GM12878 (cell line): ENCODE measurements at regions of chr4 and their contacts with region 1.

Region 1: DNA sequence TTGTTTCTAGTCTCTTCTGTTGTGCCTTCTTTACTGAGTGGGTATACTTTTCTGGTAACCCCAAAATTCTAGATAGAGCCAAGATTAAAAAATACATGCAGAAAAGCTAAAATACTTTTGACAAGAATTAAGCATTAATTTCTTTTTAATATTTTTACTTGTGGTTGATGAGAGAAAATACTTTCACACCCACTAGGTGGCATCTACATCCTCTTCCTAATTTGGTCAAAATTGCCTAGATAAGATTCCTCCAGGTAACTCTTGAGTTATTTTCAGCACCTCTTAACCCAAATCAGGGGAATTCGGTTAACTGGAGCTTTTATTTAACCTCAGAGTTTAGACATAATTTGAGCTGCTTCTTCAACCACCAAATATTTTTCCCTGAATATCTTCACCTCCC is 28.4 kb upstream of the COX7B2 start:
- DNase-seq: no peak
- ATAC-seq: 0 out of 3 replicates have a peak, but pooled peaks have one; percentile 42
- H3K4me3 ChIP-seq: no peak overlapping the region
- H3K27ac ChIP-seq: no peak overlapping the region
- H3K4me1 ChIP-seq: no peaks in the 10 kb centered on the region
- H3K27me3 ChIP-seq: no peaks in the 10 kb centered on the region
- CTCF ChIP-seq: peak in 2 of 3 experiments; percentile 12 to 41; a peak in 2 of 6 replicates
- EP300 ChIP-seq: no peak
- POLR2A ChIP-seq: no peak
- RAD21 ChIP-seq: peak; percentile 50

Region 2: GRCh38 chr4:46656071-46656470 is 281.4 kb before region 1 on chr4:
- CTCF ChIA-PET with region 1: no interaction called
- POLR2A ChIA-PET with region 1: no interaction called
- RAD21 ChIA-PET with region 1: no interaction called
- SMC1A ChIA-PET with region 1: no interaction called
- in situ Hi-C with region 1: no loop called
- intact Hi-C with region 1: no loop called
- DNase-seq: no peak
- ATAC-seq: peak; percentile 58
- H3K4me3 ChIP-seq: no peak overlapping the region
- H3K27ac ChIP-seq: no peak overlapping the region
- H3K4me1 ChIP-seq: no peaks in the 10 kb centered on the region
- H3K27me3 ChIP-seq: no peaks in the 10 kb centered on the region
- CTCF ChIP-seq: no peak
- EP300 ChIP-seq: no peak
- POLR2A ChIP-seq: no peak
- RAD21 ChIP-seq: no peak

Region 3: GRCh38 chr4:46900082-46900481 is 37.4 kb before region 1 on chr4:
- CTCF ChIA-PET with region 1: no interaction called
- POLR2A ChIA-PET with region 1: no interaction called
- RAD21 ChIA-PET with region 1: no interaction called
- SMC1A ChIA-PET with region 1: no interaction called
- in situ Hi-C with region 1: no loop called
- intact Hi-C with region 1: no loop called
- DNase-seq: no peak
- ATAC-seq: no peak
- H3K4me3 ChIP-seq: no peak overlapping the region
- H3K27ac ChIP-seq: no peak overlapping the region
- H3K4me1 ChIP-seq: no peaks in the 10 kb centered on the region
- H3K27me3 ChIP-seq: no peaks in the 10 kb centered on the region
- CTCF ChIP-seq: no peak
- EP300 ChIP-seq: no peak
- POLR2A ChIP-seq: no peak
- RAD21 ChIP-seq: no peak

Region 4: GRCh38 chr4:46956451-46956850 is 19.0 kb after region 1 on chr4:
- CTCF ChIA-PET with region 1: interaction called, 41 read pairs
- POLR2A ChIA-PET with region 1: no interaction called
- RAD21 ChIA-PET with region 1: interaction called, 6 read pairs
- SMC1A ChIA-PET with region 1: interaction called, 47 read pairs
- in situ Hi-C with region 1: no loop called
- intact Hi-C with region 1: no loop called
- DNase-seq: no peak
- ATAC-seq: no peak
- H3K4me3 ChIP-seq: no peak overlapping the region
- H3K27ac ChIP-seq: no peak overlapping the region
- H3K4me1 ChIP-seq: no peaks in the 10 kb centered on the region
- H3K27me3 ChIP-seq: no peaks in the 10 kb centered on the region
- CTCF ChIP-seq: no peak
- EP300 ChIP-seq: no peak
- POLR2A ChIP-seq: no peak
- RAD21 ChIP-seq: no peak

Region 5: GRCh38 chr4:46986922-46987638 is 49.6 kb after region 1 on chr4:
- CTCF ChIA-PET with region 1: interaction called, 4 read pairs
- POLR2A ChIA-PET with region 1: no interaction called
- RAD21 ChIA-PET with region 1: interaction called, 9 read pairs
- SMC1A ChIA-PET with region 1: interaction called, 22 read pairs
- in situ Hi-C with region 1: no loop called
- intact Hi-C with region 1: no loop called
- DNase-seq: no peak
- ATAC-seq: peak; percentile 55; the same call in 2 of the 3 replicates
- H3K4me3 ChIP-seq: no peak overlapping the region
- H3K27ac ChIP-seq: no peak overlapping the region
- H3K4me1 ChIP-seq: no peaks in the 10 kb centered on the region
- H3K27me3 ChIP-seq: no peaks in the 10 kb centered on the region
- CTCF ChIP-seq: no peak
- EP300 ChIP-seq: no peak
- POLR2A ChIP-seq: no peak
- RAD21 ChIP-seq: no peak

Region 6: DNA sequence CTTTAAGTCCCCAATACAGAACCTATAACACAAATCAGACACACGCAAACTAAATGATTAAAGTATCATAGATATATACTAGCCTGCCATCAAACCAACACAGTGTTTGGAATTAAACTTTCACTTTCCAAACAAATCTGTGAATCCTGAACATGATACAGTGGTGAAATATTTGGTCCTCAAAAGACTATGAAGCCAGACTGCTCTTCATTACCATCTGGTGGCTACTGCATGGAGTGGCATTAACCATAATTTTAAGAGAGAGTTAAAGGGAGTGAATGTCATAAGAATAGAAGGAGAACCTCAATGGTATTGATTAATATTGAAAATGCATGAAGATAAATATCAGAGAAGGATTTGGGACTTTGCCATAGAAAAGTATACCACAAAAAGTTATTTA is 65.1 kb after region 1 on chr4:
- CTCF ChIA-PET with region 1: interaction called, 46 read pairs
- POLR2A ChIA-PET with region 1: no interaction called
- RAD21 ChIA-PET with region 1: interaction called, 8 read pairs
- SMC1A ChIA-PET with region 1: interaction called, 70 read pairs
- in situ Hi-C with region 1: no loop called
- intact Hi-C with region 1: loop called (anchors 1 kb)
- DNase-seq: no peak
- ATAC-seq: peak; percentile 73
- H3K4me3 ChIP-seq: no peak overlapping the region
- H3K27ac ChIP-seq: no peak overlapping the region
- H3K4me1 ChIP-seq: no peaks in the 10 kb centered on the region
- H3K27me3 ChIP-seq: no peaks in the 10 kb centered on the region
- CTCF ChIP-seq: peak in 2 of 3 experiments; percentile 32 to 40; a peak in 3 of 6 replicates
- EP300 ChIP-seq: no peak
- POLR2A ChIP-seq: no peak
- RAD21 ChIP-seq: peak; percentile 74

Region 7: DNA sequence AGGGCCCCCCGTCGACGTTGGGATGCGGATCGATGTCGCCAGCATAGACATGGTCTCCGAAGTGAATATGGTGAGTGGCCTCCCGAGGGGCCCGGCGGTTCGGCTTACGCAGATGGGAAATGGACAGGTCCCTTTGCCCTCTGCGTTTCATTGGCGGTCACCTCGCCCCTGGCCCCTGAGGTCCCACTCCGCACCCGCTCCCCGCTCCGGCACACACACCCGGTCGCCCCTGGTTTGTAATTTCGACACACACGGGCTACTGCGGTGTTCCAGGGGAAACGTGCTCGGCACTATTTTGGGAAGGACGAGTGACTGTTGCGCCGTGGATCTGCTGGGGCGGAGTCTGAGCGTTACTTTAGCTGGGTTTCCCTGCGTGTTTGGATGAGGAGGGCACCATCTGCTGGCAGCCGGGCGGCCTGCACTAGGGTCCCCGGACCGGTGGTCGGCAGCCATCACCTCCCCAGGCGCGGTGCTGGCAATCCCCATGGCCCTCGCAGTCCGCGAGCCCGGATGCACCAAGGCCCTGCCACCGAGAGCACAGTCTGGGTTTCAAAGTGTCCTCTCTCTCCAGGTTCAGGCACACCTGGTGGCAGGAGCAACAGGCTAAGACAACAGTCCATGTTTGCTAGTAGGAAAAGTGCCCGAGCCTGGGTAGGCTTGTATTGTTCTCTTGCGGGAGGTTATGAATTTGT is 95.1 kb after region 1 on chr4:
- CTCF ChIA-PET with region 1: interaction called, 79 read pairs
- POLR2A ChIA-PET with region 1: no interaction called
- RAD21 ChIA-PET with region 1: interaction called, 52 read pairs
- SMC1A ChIA-PET with region 1: interaction called, 57 read pairs
- in situ Hi-C with region 1: loop called (anchors 5 kb)
- intact Hi-C with region 1: loop called (anchors 1 kb)
- DNase-seq: no peak
- ATAC-seq: peak; percentile 98
- H3K4me3 ChIP-seq: peak overlapping the region; percentile 21; the same call in 1 of the 2 replicates
- H3K27ac ChIP-seq: no peak overlapping the region
- H3K4me1 ChIP-seq: no peaks in the 10 kb centered on the region
- H3K27me3 ChIP-seq: peaks cover 2 to 10% of the 10 kb centered on the region in 2 experiments
- CTCF ChIP-seq: peak; percentile 62 to 83 (median 78)
- EP300 ChIP-seq: no peak
- POLR2A ChIP-seq: no peak
- RAD21 ChIP-seq: peak; percentile 71

Region 8: DNA sequence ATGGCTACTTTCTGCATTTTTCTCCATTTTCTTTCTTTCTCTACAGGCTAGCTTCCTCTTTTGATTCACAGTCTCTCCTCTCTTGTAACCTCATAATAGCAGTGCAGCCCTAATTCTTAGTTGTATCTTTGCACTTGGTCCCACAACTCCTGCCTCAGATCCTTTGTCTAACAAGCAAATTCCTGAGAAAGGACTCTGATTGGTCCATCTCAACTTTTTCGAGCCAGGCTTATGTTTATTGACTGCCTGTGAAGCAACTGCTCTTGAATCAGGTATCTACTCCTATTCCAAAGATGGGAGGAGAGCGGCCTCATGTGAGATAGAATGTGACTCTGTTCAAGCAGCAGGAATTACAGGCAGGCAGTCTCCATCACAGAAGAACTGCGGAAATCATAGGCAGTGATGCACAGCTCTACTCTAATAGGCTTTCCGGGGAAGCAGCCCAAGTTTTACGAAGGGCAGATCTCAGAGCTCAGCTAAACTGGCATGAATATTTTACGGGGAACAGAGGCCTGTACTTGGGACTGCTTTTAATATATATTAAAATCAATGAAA is 217.4 kb after region 1 on chr4:
- CTCF ChIA-PET with region 1: no interaction called
- POLR2A ChIA-PET with region 1: no interaction called
- RAD21 ChIA-PET with region 1: no interaction called
- SMC1A ChIA-PET with region 1: no interaction called
- in situ Hi-C with region 1: no loop called
- intact Hi-C with region 1: no loop called
- DNase-seq: no peak
- ATAC-seq: no peak
- H3K4me3 ChIP-seq: no peak overlapping the region
- H3K27ac ChIP-seq: no peak overlapping the region
- H3K4me1 ChIP-seq: no peaks in the 10 kb centered on the region
- H3K27me3 ChIP-seq: no peaks in the 10 kb centered on the region
- CTCF ChIP-seq: no peak
- EP300 ChIP-seq: no peak
- POLR2A ChIP-seq: no peak
- RAD21 ChIP-seq: no peak